MCF 10A (cell line): ENCODE measurements at regions of chr10 and their contacts with region 1.

Region 1: DNA sequence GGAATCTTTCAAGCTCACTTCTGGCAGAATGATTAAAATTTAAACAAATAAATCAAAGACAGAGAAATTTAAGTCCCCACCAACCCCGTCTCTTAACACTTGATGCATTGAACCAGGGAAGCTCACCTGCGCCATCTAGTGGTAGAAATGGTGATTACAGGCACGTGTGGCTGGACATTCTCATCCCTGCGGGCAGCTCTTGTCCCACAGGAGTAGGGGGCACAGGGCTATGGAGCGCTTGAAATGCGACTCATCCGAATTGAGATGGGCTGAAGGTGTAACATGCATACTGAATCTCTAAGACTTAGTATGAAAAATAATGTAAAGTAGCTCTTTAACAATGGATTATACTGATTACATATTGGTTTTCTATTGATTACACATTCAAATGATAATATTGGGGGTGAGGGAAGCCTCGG is 24.8 kb upstream of the SLIT1 start:
- DNase-seq: peak; percentile 79
- H3K4me3 Mint-ChIP-seq: no peak overlapping the region
- H3K27ac Mint-ChIP-seq: no peak overlapping the region
- H3K4me1 Mint-ChIP-seq: no peaks in the 10 kb centered on the region
- H3K27me3 Mint-ChIP-seq: peaks cover 30% of the 10 kb centered on the region
- CTCF ChIP-seq: peak; percentile 92

Region 2: DNA sequence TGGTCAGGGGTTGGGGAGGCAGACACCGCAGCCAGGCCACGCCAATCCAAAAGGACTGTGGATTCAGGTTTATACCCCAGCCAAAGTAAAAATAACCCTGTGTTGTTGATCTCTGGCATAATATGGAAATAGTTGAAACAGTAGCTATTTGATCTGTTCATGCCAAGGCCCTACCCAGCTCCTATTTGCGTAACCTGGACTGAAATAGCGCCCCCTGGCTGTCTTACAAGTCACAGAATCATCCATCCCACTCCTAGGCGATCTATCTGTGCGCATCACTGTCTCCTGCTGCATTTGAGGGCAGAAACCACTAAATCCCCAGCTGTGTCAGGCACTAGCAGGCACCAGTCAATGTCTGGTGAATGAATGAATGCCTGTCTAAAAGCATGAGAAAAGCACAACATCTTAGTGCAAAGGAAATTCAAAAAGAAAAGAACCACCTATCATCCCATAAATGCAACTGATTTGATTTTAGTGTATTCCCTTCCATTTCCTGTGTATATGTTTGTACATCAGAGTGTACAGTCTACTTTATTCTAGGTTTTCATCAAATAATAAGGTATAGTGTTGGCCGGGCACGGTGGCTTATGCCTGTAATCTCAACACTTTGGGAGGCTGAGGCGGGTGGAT is 184.8 kb before region 1 on chr10:
- CTCF ChIA-PET with region 1: interaction called, 17 read pairs
- POLR2A ChIA-PET with region 1: no interaction called
- intact Hi-C with region 1: no loop called
- DNase-seq: peak; percentile 76
- H3K4me3 Mint-ChIP-seq: no peak overlapping the region
- H3K27ac Mint-ChIP-seq: no peak overlapping the region
- H3K4me1 Mint-ChIP-seq: peaks cover 10% of the 10 kb centered on the region
- H3K27me3 Mint-ChIP-seq: peaks cover 15% of the 10 kb centered on the region
- CTCF ChIP-seq: peak; percentile 64

Region 3: GRCh38 chr10:97065128-97065527 is 145.4 kb before region 1 on chr10:
- CTCF ChIA-PET with region 1: interaction called, 179 read pairs
- POLR2A ChIA-PET with region 1: interaction called, 3 read pairs
- intact Hi-C with region 1: no loop called
- DNase-seq: no peak
- H3K4me3 Mint-ChIP-seq: no peak overlapping the region
- H3K27ac Mint-ChIP-seq: no peak overlapping the region
- H3K4me1 Mint-ChIP-seq: no peaks in the 10 kb centered on the region
- H3K27me3 Mint-ChIP-seq: no peaks in the 10 kb centered on the region
- CTCF ChIP-seq: no peak

Region 4: DNA sequence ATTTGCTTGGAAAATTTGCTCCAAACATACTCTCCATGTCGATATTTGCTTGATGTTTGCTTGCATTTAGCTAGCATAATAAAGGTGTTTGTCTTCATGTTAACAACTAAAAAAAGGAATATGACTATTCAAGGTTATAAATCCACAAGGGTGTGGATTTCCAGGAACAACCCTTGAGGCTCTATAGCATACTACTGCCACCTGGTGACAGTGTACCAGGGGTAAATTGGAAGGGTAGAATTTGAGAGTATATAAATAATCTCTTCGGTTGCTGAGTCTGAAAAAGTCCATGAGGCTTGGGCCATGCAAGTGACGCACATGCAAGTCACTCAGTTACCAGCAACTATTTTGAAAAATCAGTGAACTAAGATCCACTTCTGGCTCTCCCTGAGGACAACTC is 93.2 kb before region 1 on chr10:
- CTCF ChIA-PET with region 1: interaction called, 16 read pairs
- POLR2A ChIA-PET with region 1: no interaction called
- intact Hi-C with region 1: no loop called
- DNase-seq: peak; percentile 37
- H3K4me3 Mint-ChIP-seq: no peak overlapping the region
- H3K27ac Mint-ChIP-seq: no peak overlapping the region
- H3K4me1 Mint-ChIP-seq: no peaks in the 10 kb centered on the region
- H3K27me3 Mint-ChIP-seq: peaks cover 58% of the 10 kb centered on the region
- CTCF ChIP-seq: peak; percentile 18

Region 5: DNA sequence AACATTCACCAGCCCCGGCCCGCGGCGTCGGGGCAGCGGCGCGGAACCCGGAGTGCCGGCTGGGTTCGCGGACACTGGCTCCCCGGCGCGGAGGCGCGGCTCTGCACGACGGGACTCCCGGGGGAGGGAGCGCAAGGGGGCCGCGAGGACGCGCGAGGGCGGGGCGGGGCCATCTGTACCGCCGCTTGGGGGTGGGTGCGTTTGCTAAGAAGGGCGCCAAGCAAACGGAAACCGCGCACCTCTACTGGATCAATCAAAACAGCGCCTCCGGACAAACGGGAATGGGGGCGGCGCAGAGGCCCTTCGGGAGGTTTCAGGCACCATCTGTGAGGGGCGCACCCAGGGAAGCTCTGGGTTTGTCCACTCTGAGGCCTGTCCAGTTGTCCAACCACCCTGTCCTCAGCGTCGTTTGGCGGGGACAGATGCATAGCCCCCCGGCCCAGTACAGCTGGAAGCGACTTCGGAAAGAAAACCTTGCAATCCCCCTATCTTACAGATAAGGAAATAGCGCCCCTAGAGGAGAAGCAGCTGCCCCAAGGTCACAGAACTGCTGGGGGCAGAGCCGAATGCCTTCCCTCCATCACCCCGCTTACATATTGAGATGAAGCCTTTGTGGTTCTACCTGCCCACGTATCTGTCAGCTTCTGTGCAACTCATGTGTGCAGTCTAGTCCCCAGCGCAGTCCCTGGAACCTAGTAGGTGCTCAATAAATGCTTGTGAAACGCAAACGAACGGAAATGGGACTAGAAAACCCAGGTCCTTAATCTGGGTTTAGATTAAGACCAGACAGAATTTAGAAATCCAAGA is 14.1 kb before region 1 on chr10:
- CTCF ChIA-PET with region 1: interaction called, 111 read pairs
- POLR2A ChIA-PET with region 1: interaction called, 3 read pairs
- intact Hi-C with region 1: no loop called
- DNase-seq: peak; percentile 55
- H3K4me3 Mint-ChIP-seq: peak overlapping the region; percentile 50
- H3K27ac Mint-ChIP-seq: no peak overlapping the region
- H3K4me1 Mint-ChIP-seq: no peaks in the 10 kb centered on the region
- H3K27me3 Mint-ChIP-seq: peaks cover 36% of the 10 kb centered on the region
- CTCF ChIP-seq: peak; percentile 69

Region 6: GRCh38 chr10:97376413-97376812 is 165.9 kb after region 1 on chr10:
- CTCF ChIA-PET with region 1: no interaction called
- POLR2A ChIA-PET with region 1: no interaction called
- intact Hi-C with region 1: no loop called
- DNase-seq: no peak
- H3K4me3 Mint-ChIP-seq: no peak overlapping the region
- H3K27ac Mint-ChIP-seq: no peak overlapping the region
- H3K4me1 Mint-ChIP-seq: no peaks in the 10 kb centered on the region
- H3K27me3 Mint-ChIP-seq: no peaks in the 10 kb centered on the region
- CTCF ChIP-seq: no peak